Transverse colon (tissue), 4 donors: ENCODE measurements at regions of chr18 and their contacts with region 1.

Region 1: DNA sequence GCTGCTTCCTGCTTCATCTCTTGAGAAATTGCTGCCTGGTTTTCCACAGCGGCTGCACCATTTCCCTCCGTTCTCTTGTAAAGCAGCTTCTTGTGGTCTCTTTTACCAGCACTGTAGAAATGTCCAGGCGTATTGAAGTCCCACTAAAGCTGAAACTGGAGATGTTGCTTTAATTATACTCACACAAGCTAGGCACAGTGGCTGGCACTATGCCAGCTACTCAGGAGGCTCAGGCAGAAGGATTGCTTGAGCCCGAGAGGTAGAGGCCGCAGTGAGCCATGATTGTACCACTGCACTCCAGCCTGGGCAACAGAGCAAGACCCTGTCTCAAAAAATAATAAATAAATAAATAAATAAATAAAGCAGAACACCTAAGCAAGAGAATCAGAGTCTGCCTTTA is 19.2 kb upstream of the ATP9B start:
- DNase-seq: no peak
- H3K4me3 ChIP-seq: no peak overlapping the region
- H3K27ac ChIP-seq: no peak overlapping the region
- H3K4me1 ChIP-seq: no peaks in the 10 kb centered on the region
- H3K27me3 ChIP-seq: no peaks in the 10 kb centered on the region
- CTCF ChIP-seq: no peak
- EP300 ChIP-seq: no peak
- POLR2A ChIP-seq: no peak

Region 2: GRCh38 chr18:78984941-78985784 is 64.8 kb before region 1 on chr18:
- in situ Hi-C with region 1: no loop called
- intact Hi-C with region 1: no loop called
- DNase-seq: no peak
- H3K4me3 ChIP-seq: no peak overlapping the region
- H3K27ac ChIP-seq: no peak overlapping the region
- H3K4me1 ChIP-seq: peaks cover 0 to 10% (median 5%) of the 10 kb centered on the region in 4 donors
- H3K27me3 ChIP-seq: peaks cover 97% of the 10 kb centered on the region
- CTCF ChIP-seq: no peak
- EP300 ChIP-seq: no peak
- POLR2A ChIP-seq: no peak

Region 3: DNA sequence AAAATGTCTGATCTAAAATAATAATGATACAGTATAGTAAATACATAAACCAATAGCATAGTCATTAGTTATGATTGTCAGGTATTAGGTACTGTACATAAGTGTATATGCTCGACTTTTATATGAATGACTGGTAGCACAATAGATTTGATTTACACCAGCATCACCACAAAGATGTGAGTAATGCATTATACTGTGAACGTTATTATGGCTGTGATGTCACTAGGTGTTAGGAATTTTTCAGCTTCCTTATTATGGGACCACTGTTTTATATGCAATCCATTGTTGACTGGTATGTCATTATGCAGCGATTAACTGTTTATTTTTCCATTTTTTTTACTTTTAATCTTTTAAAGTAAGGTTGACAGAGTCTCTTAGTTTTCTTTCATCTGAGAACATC is 42.9 kb after region 1 on chr18:
- in situ Hi-C with region 1: no loop called
- intact Hi-C with region 1: loop called (anchors 2 kb)
- DNase-seq: no peak
- H3K4me3 ChIP-seq: no peak overlapping the region
- H3K27ac ChIP-seq: no peak overlapping the region
- H3K4me1 ChIP-seq: peaks cover 0 to 11% (median 0%) of the 10 kb centered on the region in 4 donors
- H3K27me3 ChIP-seq: no peaks in the 10 kb centered on the region
- CTCF ChIP-seq: no peak
- EP300 ChIP-seq: no peak
- POLR2A ChIP-seq: no peak

Region 4: DNA sequence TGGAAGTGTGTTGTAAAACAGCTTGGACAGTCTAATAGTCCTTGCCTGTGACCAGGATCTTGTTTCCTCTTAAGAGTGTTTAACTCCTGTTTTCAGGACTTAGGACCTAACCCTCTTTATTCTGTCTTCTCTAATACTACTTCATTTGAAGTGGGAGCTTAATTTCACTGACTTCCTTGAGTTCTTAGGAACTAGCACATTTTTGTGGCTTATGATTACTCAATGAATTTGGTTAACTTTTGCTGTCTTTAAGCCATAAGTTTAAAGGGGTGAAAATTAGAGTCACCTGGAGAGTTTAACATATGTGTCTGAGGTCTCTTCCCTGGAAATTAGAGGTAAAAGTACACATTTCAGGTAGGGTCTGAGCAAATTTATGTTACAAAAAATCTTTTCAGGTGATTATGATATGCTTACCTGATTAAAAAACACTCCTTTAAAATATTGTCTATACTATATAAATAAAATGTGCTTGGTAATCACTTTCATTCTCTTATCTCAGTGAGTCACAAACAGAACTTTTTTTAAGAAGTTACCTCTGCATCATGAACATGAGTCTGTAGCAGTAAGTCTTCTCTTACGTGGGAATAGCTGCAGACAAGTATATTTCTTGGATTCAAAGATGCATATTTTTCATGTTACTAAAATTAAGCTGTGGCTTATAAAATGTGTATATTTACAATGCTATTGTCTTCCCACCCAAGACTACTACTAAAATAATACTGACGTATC is 71.9 kb after region 1 on chr18:
- in situ Hi-C with region 1: no loop called
- intact Hi-C with region 1: no loop called
- DNase-seq: no peak
- H3K4me3 ChIP-seq: no peak overlapping the region
- H3K27ac ChIP-seq: no peak overlapping the region
- H3K4me1 ChIP-seq: no peaks in the 10 kb centered on the region
- H3K27me3 ChIP-seq: no peaks in the 10 kb centered on the region
- CTCF ChIP-seq: no peak
- EP300 ChIP-seq: no peak
- POLR2A ChIP-seq: no peak